ENCODE measurements at regions of chr2 and their contacts with region 1.

Region 1: GRCh38 chr2:111975053-111975552 is 76.7 kb downstream of the MERTK start:
- DNase-seq: peak; percentile 49 to 75
- H3K4me3 ChIP-seq: no peak overlapping the region
- H3K27ac ChIP-seq: peak overlapping the region; percentile 66 to 79
- H3K4me1 ChIP-seq: peaks cover 4 to 49% (median 24%) of the 10 kb centered on the region in 4 donors
- H3K27me3 ChIP-seq: no peaks in the 10 kb centered on the region
- CTCF ChIP-seq: no peak

Region 2: GRCh38 chr2:111905990-111906735 is 68.9 kb before region 1 on chr2:
- intact Hi-C with region 1: loop called (anchors 2 kb)
- DNase-seq: no peak
- H3K4me3 ChIP-seq: peak overlapping the region in 1 of 2 donors; percentile 23
- H3K27ac ChIP-seq: peak overlapping the region; percentile 81 to 83
- H3K4me1 ChIP-seq: peaks cover 0 to 92% (median 39%) of the 10 kb centered on the region in 4 donors
- H3K27me3 ChIP-seq: no peaks in the 10 kb centered on the region
- CTCF ChIP-seq: no peak